ENCODE measurements at regions of chr19 and their contacts with region 1.

Region 1: DNA sequence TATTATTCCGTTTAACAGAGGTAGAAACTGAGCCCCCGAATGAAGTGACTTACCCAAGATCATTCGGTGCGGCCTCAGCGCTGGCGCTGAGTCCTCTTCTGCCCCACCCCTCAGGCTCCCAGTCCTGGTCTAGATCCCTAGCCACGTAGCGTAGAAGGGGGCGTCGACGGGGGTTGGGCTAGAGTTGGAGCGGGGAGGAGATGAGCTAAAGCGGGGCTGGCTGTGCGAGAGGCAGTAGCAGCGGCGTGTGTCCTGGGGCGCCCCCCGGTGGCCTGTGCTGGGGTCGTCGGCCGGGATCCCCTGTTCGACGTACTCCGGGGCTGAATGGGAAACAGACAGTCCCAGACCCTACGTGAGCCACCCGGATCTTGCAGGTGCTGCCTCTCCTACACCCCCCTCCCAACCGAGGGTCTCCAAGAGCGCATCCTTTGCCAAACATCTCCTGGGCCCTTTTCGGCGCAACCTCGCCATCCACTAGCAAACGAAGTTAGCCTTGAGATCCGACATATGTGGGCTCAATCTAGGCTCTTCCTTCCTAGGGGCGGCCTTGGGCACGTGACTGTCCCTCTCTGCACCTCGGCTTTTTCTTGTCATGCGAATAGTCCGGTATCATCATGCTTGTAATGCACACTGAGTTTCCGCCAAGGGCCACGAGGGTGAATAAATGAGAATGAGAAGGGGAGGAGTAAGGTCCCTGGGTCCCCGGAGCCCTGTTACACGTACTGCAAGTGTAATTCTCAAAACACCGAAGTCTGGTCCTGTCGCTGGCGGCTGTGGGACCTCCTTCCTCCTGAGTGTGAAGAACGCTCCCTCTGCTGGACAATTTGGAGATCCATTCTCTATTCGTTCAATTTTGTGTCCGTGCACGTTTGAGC is 47.7 kb downstream of the CYP4F22 start:
- DNase-seq: peak; percentile 92
- H3K4me3 Mint-ChIP-seq: peak overlapping the region; percentile 82
- H3K27ac Mint-ChIP-seq: peak overlapping the region; percentile 70
- H3K4me1 Mint-ChIP-seq: peaks cover 16% of the 10 kb centered on the region
- H3K27me3 Mint-ChIP-seq: peaks cover 5% of the 10 kb centered on the region

Region 2: GRCh38 chr19:15091901-15092753 is 463.9 kb before region 1 on chr19:
- intact Hi-C with region 1: loop called (anchors 5 kb)
- DNase-seq: peak; percentile 29
- H3K4me3 Mint-ChIP-seq: no peak overlapping the region
- H3K27ac Mint-ChIP-seq: no peak overlapping the region
- H3K4me1 Mint-ChIP-seq: peaks cover 3% of the 10 kb centered on the region
- H3K27me3 Mint-ChIP-seq: no peaks in the 10 kb centered on the region

Region 3: DNA sequence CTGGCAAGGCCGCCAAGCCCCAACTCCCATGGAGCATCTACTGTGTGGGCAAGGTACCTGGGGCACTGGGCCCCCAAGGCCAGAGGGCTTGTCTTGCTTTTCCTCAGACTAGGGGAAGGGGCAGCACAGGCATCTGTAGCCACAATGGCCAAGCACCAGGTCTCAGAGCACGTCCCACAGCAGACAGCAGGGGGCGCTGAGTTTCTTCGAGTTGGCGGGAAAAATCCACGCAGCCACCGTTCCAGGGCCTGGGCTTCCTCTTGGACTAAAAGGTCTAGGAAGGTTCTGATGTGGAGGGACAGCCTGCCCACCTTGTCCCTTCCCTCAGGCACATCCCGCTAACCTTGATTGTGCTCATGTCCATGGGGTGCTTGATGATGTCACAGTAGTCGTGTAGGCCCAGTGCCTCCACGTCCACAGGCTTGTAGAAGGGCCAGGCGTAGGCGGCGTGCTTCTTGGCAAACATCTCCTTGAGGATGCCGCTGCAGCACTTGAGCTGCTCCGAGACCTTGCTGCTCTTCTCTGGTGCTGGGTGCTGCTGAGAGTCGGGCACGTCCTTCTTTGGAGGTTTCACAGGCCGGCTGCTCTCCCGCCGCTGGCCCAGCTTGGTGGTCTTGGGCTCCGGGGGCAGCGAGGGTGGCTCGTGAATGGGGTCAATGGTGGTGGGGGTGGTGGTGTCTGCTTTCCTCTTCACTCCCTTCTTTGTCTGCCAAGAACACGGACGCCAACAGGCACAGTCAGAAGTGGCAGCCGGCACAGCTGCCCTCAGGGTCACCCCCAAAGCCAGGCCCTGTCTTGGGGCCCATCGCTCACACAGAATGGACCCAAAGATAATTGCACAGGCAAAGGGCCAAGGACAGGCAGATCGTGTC is 291.7 kb before region 1 on chr19:
- intact Hi-C with region 1: loop called (anchors 2 kb)
- DNase-seq: peak; percentile 53
- H3K4me3 Mint-ChIP-seq: no peak overlapping the region
- H3K27ac Mint-ChIP-seq: peak overlapping the region; percentile 28
- H3K4me1 Mint-ChIP-seq: peaks cover 1% of the 10 kb centered on the region
- H3K27me3 Mint-ChIP-seq: no peaks in the 10 kb centered on the region

Region 4: DNA sequence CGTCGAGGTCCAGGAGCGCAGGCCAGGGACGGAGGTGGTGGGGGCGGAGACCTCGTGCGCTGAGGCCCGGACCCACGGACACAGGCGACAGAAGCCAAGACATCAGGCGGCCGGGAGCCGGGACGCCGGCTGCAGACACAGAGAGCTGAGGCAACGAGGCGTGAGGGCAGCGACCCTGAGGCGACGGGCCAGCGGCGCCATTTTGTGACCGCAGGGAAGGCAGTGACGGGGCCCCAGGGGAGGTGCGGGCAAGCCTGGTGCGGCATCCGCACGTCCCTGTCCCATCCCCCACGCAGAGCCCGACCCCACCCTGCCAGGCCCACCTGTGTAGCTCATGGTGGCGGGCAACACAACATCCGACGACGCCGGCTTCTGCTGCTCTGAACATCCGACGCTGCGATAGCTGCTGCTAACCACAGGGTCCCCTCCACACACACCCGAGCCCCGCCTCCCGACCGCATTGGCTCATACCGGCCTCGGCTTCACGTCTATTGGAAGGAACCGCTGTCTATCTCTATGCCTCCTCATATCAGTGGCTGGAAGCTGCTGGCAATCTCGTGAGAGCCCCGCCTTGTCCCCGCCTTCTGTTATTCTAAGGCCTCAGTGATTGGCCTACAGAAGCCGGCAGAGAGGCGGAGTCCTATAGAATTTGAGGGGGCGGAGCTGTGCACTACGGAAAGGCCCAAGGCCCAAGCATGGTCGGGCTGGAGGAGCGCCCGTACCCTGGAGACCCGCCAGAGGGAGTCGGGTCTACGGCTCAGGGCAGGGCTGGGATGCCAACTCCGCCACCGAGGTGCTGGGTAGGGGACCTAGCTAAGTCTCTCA is 137.2 kb before region 1 on chr19 and contains the start of gene AKAP8L:
- intact Hi-C with region 1: loop called (anchors 1 kb)
- DNase-seq: peak; percentile 99
- H3K4me3 Mint-ChIP-seq: peak within 1 kb of the TSS; percentile 99
- H3K27ac Mint-ChIP-seq: peak within 1 kb of the TSS; percentile 99
- H3K4me1 Mint-ChIP-seq: peaks cover 33% of the 10 kb centered on the region
- H3K27me3 Mint-ChIP-seq: no peaks in the 10 kb centered on the region
- total RNA-seq, gene AKAP8L: 76.6 and 87.4 TPM in 2 replicates

Region 5: GRCh38 chr19:15466851-15467733 is 88.9 kb before region 1 on chr19:
- intact Hi-C with region 1: loop called (anchors 1 kb)
- DNase-seq: peak; percentile 69
- H3K4me3 Mint-ChIP-seq: peak overlapping the region; percentile 43
- H3K27ac Mint-ChIP-seq: peak overlapping the region; percentile 85
- H3K4me1 Mint-ChIP-seq: peaks cover 49% of the 10 kb centered on the region
- H3K27me3 Mint-ChIP-seq: peaks cover 14% of the 10 kb centered on the region